BJ (cell line): ENCODE measurements at regions of chr17 and their contacts with region 1.

Region 1: DNA sequence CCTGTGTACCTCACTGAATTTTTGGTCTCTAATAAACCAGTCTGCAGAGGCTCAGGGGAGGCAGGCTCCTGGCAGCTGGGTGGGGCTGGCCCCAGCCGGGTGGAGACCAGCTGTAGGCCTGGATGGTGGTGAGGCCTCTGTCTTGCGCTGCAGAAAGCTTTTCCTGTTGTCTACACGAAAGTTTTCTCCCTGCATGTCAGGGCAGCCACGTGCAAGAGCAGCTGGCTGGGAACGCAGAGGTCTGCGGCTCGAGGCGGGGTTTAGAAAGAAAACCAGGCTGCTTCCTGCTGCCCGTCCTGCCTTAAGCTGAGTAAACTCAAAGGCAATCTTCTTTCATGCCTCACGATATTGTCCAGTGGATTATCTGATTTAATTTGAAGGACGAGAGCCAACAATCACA is 2.4 kb downstream of the SERPINF1 start:
- DNase-seq: peak; percentile 66
- H3K4me3 ChIP-seq: no peak overlapping the region
- H3K27me3 ChIP-seq: no peaks in the 10 kb centered on the region
- CTCF ChIP-seq: no peak

Region 2: DNA sequence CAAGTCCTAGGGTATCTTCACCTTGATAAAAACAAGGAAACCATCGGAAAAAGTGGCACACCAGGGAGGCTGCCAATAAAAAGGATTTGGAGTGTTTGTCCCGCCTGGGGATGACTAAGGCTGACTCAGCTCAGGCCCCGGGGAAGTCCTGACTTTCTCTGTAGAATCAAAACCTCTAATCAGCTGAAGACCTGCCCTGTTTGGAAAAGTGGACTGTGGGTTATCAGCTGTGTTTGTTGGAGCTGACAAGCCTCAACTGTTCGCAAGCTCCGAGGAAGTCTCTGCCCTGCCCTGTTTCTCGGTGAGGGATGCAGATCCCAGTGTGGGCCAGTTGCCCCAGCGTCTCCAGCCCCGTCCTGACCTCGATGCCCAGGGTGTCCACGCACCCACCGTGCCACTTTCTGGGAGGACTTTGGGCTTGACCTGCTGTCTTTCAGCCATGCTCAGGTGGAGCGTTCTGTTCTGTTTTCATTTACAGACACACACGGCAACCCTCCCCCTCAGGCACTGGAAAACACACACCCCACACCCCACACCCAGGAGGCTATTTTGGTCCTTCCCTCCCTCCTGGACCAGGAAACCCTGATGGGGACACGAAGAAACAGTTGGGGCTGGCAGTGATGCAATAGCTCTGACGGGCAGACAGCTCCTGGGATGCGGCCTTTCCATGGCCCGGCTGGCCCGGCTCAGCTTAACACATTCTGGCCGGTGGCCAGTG is 174.1 kb before region 1 on chr17:
- CTCF ChIA-PET with region 1: no interaction called
- POLR2A ChIA-PET with region 1: no interaction called
- DNase-seq: peak; percentile 50
- H3K4me3 ChIP-seq: no peak overlapping the region
- H3K27me3 ChIP-seq: no peaks in the 10 kb centered on the region
- CTCF ChIP-seq: no peak

Region 3: DNA sequence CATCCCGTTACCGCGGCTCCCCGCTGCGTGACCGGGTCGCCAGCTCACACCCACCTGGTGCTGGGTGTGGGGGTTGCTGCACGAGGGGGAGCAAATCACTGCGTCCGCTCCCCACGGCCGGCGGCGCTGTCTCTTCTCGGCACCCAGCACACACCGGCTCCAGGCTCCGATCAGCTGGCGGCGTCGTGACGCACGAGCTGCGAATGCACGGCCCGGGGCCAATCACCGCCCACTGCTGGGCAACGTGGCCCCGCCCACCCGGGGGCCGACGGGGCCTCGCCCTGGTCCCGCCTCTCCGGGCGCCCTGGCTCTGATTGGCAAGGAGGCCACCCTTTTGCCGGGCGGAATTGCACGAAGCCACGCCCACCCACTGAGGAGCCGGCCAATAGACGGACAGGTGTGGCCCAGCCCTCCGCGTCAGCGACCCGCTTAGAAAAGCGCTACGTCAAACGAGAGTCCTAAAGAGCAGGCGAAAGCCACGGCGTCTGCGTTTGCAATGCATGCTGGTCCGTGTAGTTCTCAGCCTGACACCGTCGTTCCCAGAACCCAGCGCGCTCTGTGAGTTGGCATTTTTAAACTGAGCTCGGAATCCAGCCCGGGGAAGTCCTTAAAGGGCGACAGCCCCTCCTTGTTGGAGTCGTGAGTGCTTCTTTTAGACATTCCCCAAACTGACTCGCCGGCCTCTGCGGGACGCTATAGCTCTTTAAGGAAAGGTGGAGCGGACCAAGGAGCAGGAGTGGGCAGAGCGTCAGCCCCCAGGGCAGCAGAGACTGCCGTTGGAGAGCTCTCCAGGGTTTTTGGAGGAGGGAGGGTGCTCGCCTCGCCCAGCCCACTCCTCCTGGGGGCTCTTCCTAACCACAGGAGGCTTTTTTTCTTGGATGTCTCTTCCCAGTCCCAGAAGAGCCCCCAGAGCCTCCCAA is 47.9 kb before region 1 on chr17:
- CTCF ChIA-PET with region 1: interaction called, 16 read pairs
- POLR2A ChIA-PET with region 1: interaction called, 18 read pairs
- DNase-seq: peak; percentile 100
- H3K4me3 ChIP-seq: peak overlapping the region; percentile 97
- H3K27me3 ChIP-seq: no peaks in the 10 kb centered on the region
- CTCF ChIP-seq: peak; percentile 37

Region 4: GRCh38 chr17:1724506-1725362 is 39.5 kb before region 1 on chr17 and contains the start of gene WDR81:
- CTCF ChIA-PET with region 1: interaction called, 16 read pairs
- POLR2A ChIA-PET with region 1: interaction called, 11 read pairs
- DNase-seq: no peak
- H3K4me3 ChIP-seq: peak within 1 kb of the TSS; percentile 65
- H3K27me3 ChIP-seq: no peaks in the 10 kb centered on the region
- CTCF ChIP-seq: no peak
- polyA plus RNA-seq, gene WDR81: 3.0 and 4.8 TPM in 2 replicates

Region 5: GRCh38 chr17:1736348-1737281 is 27.7 kb before region 1 on chr17:
- CTCF ChIA-PET with region 1: no interaction called
- POLR2A ChIA-PET with region 1: interaction called, 19 read pairs
- DNase-seq: no peak
- H3K4me3 ChIP-seq: no peak overlapping the region
- H3K27me3 ChIP-seq: no peaks in the 10 kb centered on the region
- CTCF ChIP-seq: no peak

Region 6: DNA sequence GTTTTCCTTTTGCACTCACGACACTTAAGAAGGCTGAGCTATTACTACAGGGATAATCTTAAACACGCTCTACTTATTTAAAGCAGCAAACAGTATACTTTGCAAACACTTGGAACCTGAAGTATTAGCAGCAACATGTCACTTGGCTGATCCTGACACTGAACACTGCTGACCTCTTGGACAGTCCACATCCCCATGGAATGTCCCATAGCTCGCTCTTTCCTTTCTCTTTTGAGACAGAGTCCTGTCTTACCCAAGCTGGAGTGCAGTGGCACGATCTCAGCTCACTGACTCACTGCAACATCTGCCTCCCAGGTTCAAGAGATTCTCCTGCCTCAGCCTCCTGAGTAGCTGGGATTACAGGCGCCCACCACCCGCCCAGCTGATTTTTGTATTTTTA is 39.0 kb after region 1 on chr17:
- CTCF ChIA-PET with region 1: no interaction called
- POLR2A ChIA-PET with region 1: no interaction called
- DNase-seq: no peak
- H3K4me3 ChIP-seq: no peak overlapping the region
- H3K27me3 ChIP-seq: no peaks in the 10 kb centered on the region
- CTCF ChIP-seq: no peak